Activated CD4-positive, alpha-beta memory T cell treated with anti-CD3 and anti-CD28 coated beads, Interleukin-2, amount 10 ng/mL, durations not matched to agents 7 days and 5 days (primary cell): ENCODE measurements at regions of chr4 and their contacts with region 1.

Region 1: GRCh38 chr4:153142700-153143438 is 61.4 kb upstream of the TRIM2 start:
- DNase-seq: peak; percentile 51
- H3K4me3 Mint-ChIP-seq: no peak overlapping the region
- H3K27ac Mint-ChIP-seq: no peak overlapping the region
- H3K4me1 Mint-ChIP-seq: no peaks in the 10 kb centered on the region
- H3K27me3 Mint-ChIP-seq: peaks cover 10% of the 10 kb centered on the region

Region 2: GRCh38 chr4:153067380-153067779 is 75.5 kb before region 1 on chr4:
- CTCF ChIA-PET with region 1: no interaction called
- POLR2A ChIA-PET with region 1: no interaction called
- DNase-seq: no peak
- H3K4me3 Mint-ChIP-seq: no peak overlapping the region
- H3K27ac Mint-ChIP-seq: no peak overlapping the region
- H3K4me1 Mint-ChIP-seq: no peaks in the 10 kb centered on the region
- H3K27me3 Mint-ChIP-seq: peaks cover 5% of the 10 kb centered on the region

Region 3: DNA sequence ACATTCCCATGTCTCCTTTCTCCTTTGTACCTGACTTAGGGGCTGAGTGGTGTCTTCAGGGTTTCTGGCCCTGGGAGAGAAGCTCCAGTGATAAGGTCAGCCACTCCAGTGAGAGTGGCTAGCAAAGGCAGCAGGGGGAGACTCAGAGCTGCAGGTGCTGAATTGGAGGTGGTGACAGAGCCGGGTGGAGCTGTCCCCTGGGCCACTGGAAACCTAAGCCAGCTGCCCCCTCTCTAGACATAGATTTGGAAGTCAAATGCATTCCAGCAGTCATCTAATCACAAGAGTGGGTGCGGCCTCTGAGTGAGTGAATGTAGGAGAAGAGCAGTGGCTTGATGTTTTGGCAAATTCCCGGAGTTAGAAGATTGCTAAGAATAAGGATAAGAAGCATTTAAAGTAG is 89.9 kb after region 1 on chr4:
- CTCF ChIA-PET with region 1: no interaction called
- POLR2A ChIA-PET with region 1: no interaction called
- DNase-seq: no peak
- H3K4me3 Mint-ChIP-seq: no peak overlapping the region
- H3K27ac Mint-ChIP-seq: no peak overlapping the region
- H3K4me1 Mint-ChIP-seq: peaks cover 12% of the 10 kb centered on the region
- H3K27me3 Mint-ChIP-seq: peaks cover 18% of the 10 kb centered on the region

Region 4: GRCh38 chr4:153296040-153296823 is 153.4 kb after region 1 on chr4:
- CTCF ChIA-PET with region 1: no interaction called
- POLR2A ChIA-PET with region 1: no interaction called
- DNase-seq: no peak
- H3K4me3 Mint-ChIP-seq: no peak overlapping the region
- H3K27ac Mint-ChIP-seq: no peak overlapping the region
- H3K4me1 Mint-ChIP-seq: no peaks in the 10 kb centered on the region
- H3K27me3 Mint-ChIP-seq: no peaks in the 10 kb centered on the region

Region 5: DNA sequence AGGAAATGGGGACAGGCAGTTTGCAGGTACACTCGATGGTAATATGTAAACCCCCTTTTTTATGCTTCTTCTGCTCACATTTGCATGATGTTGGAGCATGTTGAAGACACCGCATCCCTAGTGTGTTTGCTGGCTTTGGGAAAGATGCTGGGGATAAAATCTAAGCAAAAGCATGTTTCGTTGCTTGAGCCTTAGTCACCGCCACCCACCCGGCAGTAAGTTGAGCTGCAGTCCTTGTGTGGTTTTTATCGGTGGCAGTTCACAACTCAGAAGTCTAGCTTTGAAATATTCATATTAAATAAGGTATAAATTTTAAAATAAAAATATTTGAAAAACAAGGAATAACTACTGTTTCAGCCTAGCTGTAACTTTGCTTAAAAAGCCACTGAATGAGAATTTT is 179.9 kb after region 1 on chr4:
- CTCF ChIA-PET with region 1: interaction called, 11 read pairs
- POLR2A ChIA-PET with region 1: no interaction called
- DNase-seq: no peak
- H3K4me3 Mint-ChIP-seq: no peak overlapping the region
- H3K27ac Mint-ChIP-seq: no peak overlapping the region
- H3K4me1 Mint-ChIP-seq: no peaks in the 10 kb centered on the region
- H3K27me3 Mint-ChIP-seq: no peaks in the 10 kb centered on the region